ENCODE measurements at regions of chr5 and their contacts with region 1.

Region 1: DNA sequence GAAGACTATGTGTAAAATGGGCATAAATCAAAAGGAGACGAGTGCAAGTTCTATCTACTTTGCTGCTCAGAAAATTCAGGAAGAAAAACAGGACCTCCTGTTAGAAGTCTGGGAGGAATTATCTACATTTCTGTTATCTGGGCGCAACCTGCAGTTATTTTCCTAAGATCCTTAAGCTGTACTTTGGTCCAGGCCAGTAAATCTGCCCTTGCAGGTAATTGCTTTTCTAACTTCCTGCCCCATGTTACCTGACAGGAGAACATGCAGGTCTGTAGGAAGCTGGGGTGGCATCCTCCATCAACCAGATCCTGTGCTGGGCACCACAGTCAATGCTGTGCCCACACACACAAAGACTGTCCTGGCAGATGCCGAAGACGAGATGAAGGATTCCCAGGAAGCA is 5.7 kb downstream of the CCNJL start:
- DNase-seq: no peak
- H3K4me3 ChIP-seq: no peak overlapping the region
- H3K27ac ChIP-seq: no peak overlapping the region
- H3K4me1 ChIP-seq: no peaks in the 10 kb centered on the region
- H3K27me3 ChIP-seq: no peaks in the 10 kb centered on the region
- CTCF ChIP-seq: no peak

Region 2: GRCh38 chr5:159987031-159987674 is 319.5 kb before region 1 on chr5:
- CTCF ChIA-PET with region 1: no interaction called
- dilution Hi-C with region 1: no loop called
- in situ Hi-C with region 1: no loop called
- intact Hi-C with region 1: no loop called
- DNase-seq: peak; percentile 76
- H3K4me3 ChIP-seq: peak overlapping the region; percentile 11 to 21 (median 18)
- H3K27ac ChIP-seq: no peak overlapping the region
- H3K4me1 ChIP-seq: peaks cover 29% of the 10 kb centered on the region
- H3K27me3 ChIP-seq: no peaks in the 10 kb centered on the region
- CTCF ChIP-seq: peak; percentile 81 to 89

Region 3: DNA sequence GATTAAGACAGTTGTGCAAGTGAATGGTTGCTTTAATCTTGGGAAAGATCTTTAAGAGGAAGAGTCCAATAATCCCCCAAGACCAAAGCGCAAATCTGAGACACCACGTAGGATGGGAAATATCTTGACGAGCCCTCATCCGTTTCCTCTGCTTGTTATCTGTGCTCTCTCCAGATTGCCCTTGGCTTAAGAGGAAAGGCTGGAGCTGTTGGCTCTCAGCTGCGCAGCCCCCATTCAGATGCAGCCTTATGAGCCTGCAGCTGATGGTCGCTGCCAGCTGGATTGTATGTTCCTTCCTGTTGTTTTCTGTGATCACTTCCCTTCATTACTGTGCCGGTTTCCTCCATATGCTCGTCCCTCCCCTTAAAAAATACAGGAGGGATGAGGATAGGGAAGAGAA is 235.2 kb before region 1 on chr5:
- CTCF ChIA-PET with region 1: no interaction called
- dilution Hi-C with region 1: no loop called
- in situ Hi-C with region 1: no loop called
- intact Hi-C with region 1: no loop called
- DNase-seq: no peak
- H3K4me3 ChIP-seq: no peak overlapping the region
- H3K27ac ChIP-seq: no peak overlapping the region
- H3K4me1 ChIP-seq: no peaks in the 10 kb centered on the region
- H3K27me3 ChIP-seq: no peaks in the 10 kb centered on the region
- CTCF ChIP-seq: no peak

Region 4: GRCh38 chr5:160230686-160231527 is 75.8 kb before region 1 on chr5:
- CTCF ChIA-PET with region 1: no interaction called
- dilution Hi-C with region 1: loop called (anchors 5 kb)
- in situ Hi-C with region 1: no loop called
- intact Hi-C with region 1: no loop called
- DNase-seq: peak; percentile 74
- H3K4me3 ChIP-seq: no peak overlapping the region
- H3K27ac ChIP-seq: no peak overlapping the region
- H3K4me1 ChIP-seq: peaks cover 8% of the 10 kb centered on the region
- H3K27me3 ChIP-seq: no peaks in the 10 kb centered on the region
- CTCF ChIP-seq: no peak